ENCODE measurements at regions of chr5 and their contacts with region 1.

Region 1: DNA sequence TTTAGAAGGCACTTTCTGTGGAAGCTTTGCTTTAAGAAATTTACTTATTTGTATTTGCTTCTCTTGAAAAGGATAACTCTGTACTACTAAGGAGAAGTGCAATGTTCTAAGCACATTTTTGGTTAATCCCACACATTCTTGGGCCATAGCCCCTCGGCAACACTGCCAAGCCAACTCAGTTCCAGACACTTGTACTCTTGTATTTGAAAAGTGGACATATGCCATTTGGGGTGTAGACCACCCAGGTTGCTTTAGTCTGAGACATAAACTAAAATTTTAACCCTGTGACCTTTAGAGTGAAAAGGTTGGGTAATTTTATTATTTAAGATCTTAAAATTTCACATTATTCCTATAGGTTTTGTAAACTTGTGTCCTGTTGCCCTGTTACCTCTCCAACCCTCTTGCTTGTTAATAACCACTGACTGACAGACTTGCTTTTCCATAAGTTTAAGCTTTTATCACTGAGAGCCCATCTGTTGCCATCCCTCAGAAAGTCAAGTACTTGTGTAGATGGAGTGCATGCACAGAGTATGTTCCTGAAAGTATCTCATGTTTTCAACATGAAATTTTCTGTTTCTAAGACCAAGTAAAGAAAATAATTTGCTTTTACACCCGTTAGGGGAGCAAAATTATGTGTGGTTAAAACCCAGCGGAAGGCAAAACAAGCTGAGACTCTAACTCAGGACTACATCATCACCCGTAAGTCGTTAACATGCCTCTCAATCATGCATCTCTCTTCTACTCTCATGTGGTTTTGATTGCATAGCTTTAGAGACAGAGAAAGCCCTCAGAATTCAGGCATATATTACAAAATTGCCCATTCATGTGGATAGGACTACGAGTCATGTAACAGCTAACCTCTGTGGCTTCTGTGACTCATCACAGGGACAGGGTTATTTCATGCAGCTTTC is 117.3 kb downstream of the GDNF start:
- DNase-seq: peak; percentile 31
- H3K4me3 Mint-ChIP-seq: peak overlapping the region; percentile 56
- H3K27ac Mint-ChIP-seq: peak overlapping the region; percentile 84
- H3K4me1 Mint-ChIP-seq: peaks cover 49% of the 10 kb centered on the region
- H3K27me3 Mint-ChIP-seq: no peaks in the 10 kb centered on the region

Region 2: GRCh38 chr5:37111426-37112382 is 610.8 kb before region 1 on chr5:
- intact Hi-C with region 1: loop called (anchors 2 kb)
- DNase-seq: peak; percentile 36
- H3K4me3 Mint-ChIP-seq: no peak overlapping the region
- H3K27ac Mint-ChIP-seq: peak overlapping the region; percentile 70
- H3K4me1 Mint-ChIP-seq: peaks cover 37% of the 10 kb centered on the region
- H3K27me3 Mint-ChIP-seq: no peaks in the 10 kb centered on the region

Region 3: GRCh38 chr5:37370864-37371726 is 351.4 kb before region 1 on chr5 and contains the start of gene NUP155:
- intact Hi-C with region 1: loop called (anchors 5 kb)
- DNase-seq: peak; percentile 86
- H3K4me3 Mint-ChIP-seq: peak within 1 kb of the TSS; percentile 93
- H3K27ac Mint-ChIP-seq: peak within 1 kb of the TSS; percentile 92
- H3K4me1 Mint-ChIP-seq: peaks cover 22% of the 10 kb centered on the region
- H3K27me3 Mint-ChIP-seq: no peaks in the 10 kb centered on the region
- total RNA-seq, gene NUP155: 66.8 and 69.8 TPM in 2 replicates

Region 4: DNA sequence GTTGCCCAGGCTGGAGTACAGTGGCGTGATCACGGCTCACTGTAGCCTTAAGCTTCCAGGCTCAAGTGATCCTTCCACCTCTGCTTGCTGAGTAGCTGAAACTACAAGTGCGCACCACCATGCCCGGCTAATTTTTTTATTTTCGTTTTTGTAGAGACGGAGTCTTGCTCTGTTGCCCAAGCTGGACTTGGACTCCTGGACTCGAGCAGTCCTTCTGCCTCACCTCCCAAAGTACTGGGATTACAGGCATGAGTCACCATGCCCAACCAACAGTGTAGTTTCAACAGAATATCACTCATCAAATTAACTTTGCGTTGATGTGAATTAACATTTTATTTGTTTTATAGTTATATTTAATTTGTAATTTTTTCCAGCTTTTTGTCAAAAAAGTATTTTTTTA is 298.1 kb before region 1 on chr5:
- intact Hi-C with region 1: no loop called
- DNase-seq: no peak
- H3K4me3 Mint-ChIP-seq: no peak overlapping the region
- H3K27ac Mint-ChIP-seq: no peak overlapping the region
- H3K4me1 Mint-ChIP-seq: peaks cover 5% of the 10 kb centered on the region
- H3K27me3 Mint-ChIP-seq: no peaks in the 10 kb centered on the region

Region 5: GRCh38 chr5:37668524-37669047 is 53.9 kb before region 1 on chr5:
- intact Hi-C with region 1: loop called (anchors 5 kb)
- DNase-seq: no peak
- H3K4me3 Mint-ChIP-seq: no peak overlapping the region
- H3K27ac Mint-ChIP-seq: no peak overlapping the region
- H3K4me1 Mint-ChIP-seq: peaks cover 15% of the 10 kb centered on the region
- H3K27me3 Mint-ChIP-seq: no peaks in the 10 kb centered on the region

Region 6: DNA sequence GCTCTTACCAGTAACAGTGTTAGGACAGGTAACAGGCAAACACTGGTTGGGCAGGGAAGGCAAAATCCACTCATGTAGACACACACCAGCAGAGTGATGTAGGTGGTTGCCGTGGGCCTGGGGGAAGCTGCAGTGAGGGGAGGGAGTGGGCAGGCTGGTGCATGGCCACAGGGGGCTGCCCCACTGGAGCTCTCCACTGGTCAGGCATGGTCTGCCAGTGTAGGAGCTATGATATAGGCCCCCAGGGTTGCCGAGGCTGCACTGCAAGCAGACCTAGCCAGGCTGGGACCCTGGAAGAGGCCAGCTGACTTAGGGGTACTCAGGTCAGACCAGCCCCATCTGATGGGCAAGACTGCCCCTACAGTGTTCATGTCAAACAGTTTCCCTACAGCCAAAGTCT is 37.3 kb before region 1 on chr5:
- intact Hi-C with region 1: no loop called
- DNase-seq: no peak
- H3K4me3 Mint-ChIP-seq: no peak overlapping the region
- H3K27ac Mint-ChIP-seq: no peak overlapping the region
- H3K4me1 Mint-ChIP-seq: peaks cover 2% of the 10 kb centered on the region
- H3K27me3 Mint-ChIP-seq: no peaks in the 10 kb centered on the region

Region 7: DNA sequence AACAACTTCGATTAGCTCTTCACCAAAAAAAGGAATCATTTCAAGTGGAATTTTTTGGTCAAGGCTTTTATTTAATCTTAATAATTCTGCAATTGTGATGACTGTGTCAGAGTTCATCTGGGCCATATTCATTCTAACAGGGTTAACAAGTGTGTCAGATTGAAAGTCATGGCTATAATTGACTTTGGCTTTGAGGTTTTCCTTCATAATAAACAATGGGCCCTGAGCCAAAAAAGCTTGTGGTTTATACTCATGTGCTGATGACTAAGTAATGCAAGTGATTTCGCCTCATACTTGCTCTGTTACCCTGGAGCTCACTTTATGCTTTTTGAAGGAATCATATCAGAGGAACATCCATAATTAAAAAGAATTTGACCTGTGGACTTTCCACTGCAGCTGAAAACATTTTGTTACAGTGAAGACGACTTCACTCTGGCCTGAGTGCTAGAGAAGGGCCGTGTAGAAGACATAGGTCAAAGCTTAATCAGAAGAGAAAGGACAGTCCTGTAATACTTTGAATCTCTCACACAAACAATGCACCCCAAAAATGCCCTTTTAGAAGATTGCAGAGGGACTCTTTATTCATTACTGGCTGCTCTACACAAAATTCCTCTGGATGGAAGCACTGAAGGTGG is 15.7 kb after region 1 on chr5:
- intact Hi-C with region 1: loop called (anchors 1 kb)
- DNase-seq: peak; percentile 11
- H3K4me3 Mint-ChIP-seq: no peak overlapping the region
- H3K27ac Mint-ChIP-seq: peak overlapping the region; percentile 46
- H3K4me1 Mint-ChIP-seq: peaks cover 28% of the 10 kb centered on the region
- H3K27me3 Mint-ChIP-seq: no peaks in the 10 kb centered on the region